ENCODE measurements at regions of chr1 and their contacts with region 1.

Region 1: DNA sequence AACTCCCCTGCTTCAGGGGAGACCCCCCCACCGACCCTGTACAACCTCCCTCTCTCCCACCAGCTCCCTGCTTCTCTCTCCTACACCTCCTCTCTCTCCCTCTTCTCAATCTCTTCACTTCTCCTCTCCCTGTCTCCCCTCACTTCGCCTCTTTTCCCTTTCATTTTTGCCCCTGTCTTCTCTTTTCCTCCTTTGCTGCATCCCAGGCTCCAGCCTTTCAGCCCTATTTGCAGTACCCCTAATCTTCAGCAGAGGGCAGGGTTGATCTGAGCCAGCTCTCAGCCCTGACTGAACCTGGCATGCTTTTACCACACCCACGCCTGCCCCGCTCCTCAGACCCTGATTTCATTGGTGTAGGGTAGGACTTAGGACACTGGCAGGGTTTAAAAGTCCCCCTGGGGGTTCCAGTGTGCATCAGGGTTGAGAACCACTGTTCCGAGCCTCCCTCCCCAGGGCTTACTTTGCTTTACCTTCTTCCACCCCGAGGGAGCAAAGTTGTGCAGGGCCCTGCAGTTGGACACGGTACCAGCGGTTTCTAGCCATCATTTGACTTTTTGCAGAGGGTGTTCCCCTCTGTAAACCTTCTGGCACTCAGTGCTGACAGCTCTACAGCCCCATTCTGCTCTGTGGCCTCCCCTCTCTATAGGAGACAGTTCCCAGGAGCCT is 67.3 kb upstream of the CNTN2 start:
- DNase-seq: no peak
- ATAC-seq: peak; percentile 82
- H3K4me3 ChIP-seq: no peak overlapping the region
- H3K27ac ChIP-seq: no peak overlapping the region
- H3K4me1 ChIP-seq: no peaks in the 10 kb centered on the region
- H3K27me3 ChIP-seq: no peaks in the 10 kb centered on the region
- CTCF ChIP-seq: peak; percentile 79

Region 2: GRCh38 chr1:205061665-205062069 is 86.0 kb after region 1 on chr1:
- intact Hi-C with region 1: loop called (anchors 10 kb)
- DNase-seq: peak; percentile 79
- ATAC-seq: peak; percentile 76
- H3K4me3 ChIP-seq: no peak overlapping the region
- H3K27ac ChIP-seq: no peak overlapping the region
- H3K4me1 ChIP-seq: no peaks in the 10 kb centered on the region
- H3K27me3 ChIP-seq: no peaks in the 10 kb centered on the region
- CTCF ChIP-seq: peak; percentile 78